ENCODE measurements at regions of chr4 and their contacts with region 1.

Region 1: GRCh38 chr4:122873821-122874593 is 47.4 kb downstream of the FGF2 start:
- DNase-seq: peak; percentile 51
- H3K4me3 ChIP-seq: no peak overlapping the region
- H3K27ac ChIP-seq: no peak overlapping the region
- H3K4me1 ChIP-seq: peaks cover 13% of the 10 kb centered on the region
- H3K27me3 ChIP-seq: no peaks in the 10 kb centered on the region
- CTCF ChIP-seq: no peak
- POLR2A ChIP-seq: no peak

Region 2: GRCh38 chr4:122393276-122393675 is 480.7 kb before region 1 on chr4:
- CTCF ChIA-PET with region 1: no interaction called
- POLR2A ChIA-PET with region 1: no interaction called
- dilution Hi-C with region 1: no loop called
- intact Hi-C with region 1: no loop called
- DNase-seq: no peak
- H3K4me3 ChIP-seq: no peak overlapping the region
- H3K27ac ChIP-seq: no peak overlapping the region
- H3K4me1 ChIP-seq: no peaks in the 10 kb centered on the region
- H3K27me3 ChIP-seq: no peaks in the 10 kb centered on the region
- CTCF ChIP-seq: no peak
- POLR2A ChIP-seq: no peak

Region 3: GRCh38 chr4:122854447-122855352 is 19.3 kb before region 1 on chr4:
- CTCF ChIA-PET with region 1: interaction called, 5 read pairs
- POLR2A ChIA-PET with region 1: no interaction called
- dilution Hi-C with region 1: no loop called
- intact Hi-C with region 1: loop called (anchors 2 kb)
- DNase-seq: no peak
- H3K4me3 ChIP-seq: no peak overlapping the region
- H3K27ac ChIP-seq: no peak overlapping the region
- H3K4me1 ChIP-seq: peaks cover 7% of the 10 kb centered on the region
- H3K27me3 ChIP-seq: no peaks in the 10 kb centered on the region
- CTCF ChIP-seq: no peak
- POLR2A ChIP-seq: no peak